Common myeloid progenitor, CD34-positive (primary cell): ENCODE measurements at regions of chr7 and their contacts with region 1.

Region 1: DNA sequence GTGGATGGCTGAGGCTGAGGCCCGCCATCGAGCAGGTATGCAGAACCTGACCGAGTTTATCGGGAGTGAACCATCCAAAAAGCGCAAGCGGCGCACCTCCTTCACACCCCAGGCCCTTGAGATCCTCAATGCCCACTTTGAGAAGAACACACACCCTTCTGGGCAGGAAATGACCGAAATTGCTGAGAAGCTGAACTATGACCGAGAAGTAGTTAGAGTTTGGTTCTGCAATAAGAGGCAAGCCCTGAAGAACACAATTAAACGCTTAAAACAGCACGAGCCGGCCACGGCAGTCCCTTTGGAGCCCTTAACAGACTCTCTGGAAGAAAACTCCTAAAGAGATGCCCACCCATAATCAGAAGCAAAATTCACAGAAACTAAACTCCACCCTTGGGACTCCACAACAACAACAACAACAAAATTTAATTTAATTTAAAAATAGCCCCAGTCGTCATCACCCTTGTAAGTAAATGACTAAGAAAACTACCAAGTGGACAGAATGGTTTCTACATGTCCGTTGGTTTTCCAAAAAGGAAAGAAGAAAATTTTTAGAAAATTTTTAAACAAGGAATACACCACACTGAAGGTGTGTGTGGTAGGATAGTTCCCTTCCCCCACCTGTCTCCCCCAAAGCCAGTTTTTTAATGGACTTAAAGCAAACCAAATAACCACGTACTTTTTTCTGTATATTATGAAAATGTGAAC is 101.7 kb upstream of the YAE1 start:
- DNase-seq: peak in 1 of 3 donors; percentile 22
- H3K4me3 ChIP-seq: peak overlapping the region in 3 of 7 experiments; percentile 13 to 75 (median 67)
- H3K27ac ChIP-seq: no peak overlapping the region
- H3K4me1 ChIP-seq: peaks cover 4 to 54% (median 34%) of the 10 kb centered on the region in 4 experiments
- H3K27me3 ChIP-seq: no peaks in the 10 kb centered on the region

Region 2: DNA sequence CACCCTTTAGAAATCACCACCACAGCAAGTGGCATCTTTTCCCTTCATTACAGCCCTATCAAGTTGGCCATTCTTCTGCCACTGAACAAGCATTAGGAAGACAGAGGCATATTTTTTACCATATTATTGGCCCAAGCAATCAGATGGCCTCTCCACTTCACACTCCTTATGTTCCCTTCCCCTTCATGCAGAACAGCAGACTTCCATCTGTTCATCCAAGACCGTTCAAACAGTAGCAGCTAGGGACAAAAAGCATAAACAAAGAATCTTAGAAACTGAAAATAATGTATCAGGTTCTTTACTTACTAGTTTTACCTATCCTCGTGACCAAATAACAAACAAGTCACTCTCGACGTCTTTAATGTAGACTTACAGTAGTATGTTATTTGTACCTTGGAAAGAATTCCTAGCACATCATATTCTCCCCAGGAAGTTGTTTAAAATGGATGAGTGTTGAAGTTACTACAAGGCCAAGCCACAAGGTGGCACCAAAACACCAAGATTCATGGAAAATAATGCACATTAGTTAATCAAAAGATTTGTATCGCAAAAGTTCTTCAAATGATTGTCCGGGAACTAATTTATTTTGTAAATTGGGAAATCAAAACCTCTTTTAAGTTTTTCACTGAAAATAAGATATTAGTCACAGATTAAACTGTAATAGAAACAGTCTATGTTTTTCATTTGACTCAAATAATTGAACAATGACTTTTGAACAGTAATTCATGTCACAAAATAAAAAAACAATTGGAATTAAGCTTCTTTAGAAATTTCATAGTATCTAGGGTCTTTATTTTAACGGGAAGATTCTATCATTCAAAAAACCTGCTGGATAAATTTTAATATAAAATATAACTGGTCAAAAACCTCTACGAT is 667.6 kb before region 1 on chr7:
- CTCF ChIA-PET with region 1: interaction called, 20 read pairs
- POLR2A ChIA-PET with region 1: no interaction called
- DNase-seq: peak; percentile 59 to 75 (median 69)
- H3K4me3 ChIP-seq: no peak overlapping the region
- H3K27ac ChIP-seq: no peak overlapping the region
- H3K4me1 ChIP-seq: no peaks in the 10 kb centered on the region
- H3K27me3 ChIP-seq: no peaks in the 10 kb centered on the region

Region 3: GRCh38 chr7:39453743-39454355 is 10.7 kb before region 1 on chr7:
- CTCF ChIA-PET with region 1: interaction called, 30 read pairs
- POLR2A ChIA-PET with region 1: no interaction called
- DNase-seq: peak; percentile 66 to 87 (median 82)
- H3K4me3 ChIP-seq: no peak overlapping the region
- H3K27ac ChIP-seq: no peak overlapping the region
- H3K4me1 ChIP-seq: peaks cover 0 to 3% (median 0%) of the 10 kb centered on the region in 4 experiments
- H3K27me3 ChIP-seq: no peaks in the 10 kb centered on the region

Region 4: GRCh38 chr7:39517240-39517639 is 52.7 kb after region 1 on chr7:
- CTCF ChIA-PET with region 1: interaction called, 11 read pairs
- POLR2A ChIA-PET with region 1: no interaction called
- DNase-seq: no peak
- H3K4me3 ChIP-seq: no peak overlapping the region
- H3K27ac ChIP-seq: no peak overlapping the region
- H3K4me1 ChIP-seq: peaks cover 3 to 27% (median 13%) of the 10 kb centered on the region in 4 experiments
- H3K27me3 ChIP-seq: no peaks in the 10 kb centered on the region

Region 5: GRCh38 chr7:39605087-39605486 is 140.6 kb after region 1 on chr7:
- CTCF ChIA-PET with region 1: no interaction called
- POLR2A ChIA-PET with region 1: no interaction called
- DNase-seq: no peak
- H3K4me3 ChIP-seq: no peak overlapping the region
- H3K27ac ChIP-seq: no peak overlapping the region
- H3K4me1 ChIP-seq: peaks cover 10 to 37% (median 16%) of the 10 kb centered on the region in 4 experiments
- H3K27me3 ChIP-seq: no peaks in the 10 kb centered on the region